Calu3 (cell line): ENCODE measurements at regions of chr5 and their contacts with region 1.

Region 1: DNA sequence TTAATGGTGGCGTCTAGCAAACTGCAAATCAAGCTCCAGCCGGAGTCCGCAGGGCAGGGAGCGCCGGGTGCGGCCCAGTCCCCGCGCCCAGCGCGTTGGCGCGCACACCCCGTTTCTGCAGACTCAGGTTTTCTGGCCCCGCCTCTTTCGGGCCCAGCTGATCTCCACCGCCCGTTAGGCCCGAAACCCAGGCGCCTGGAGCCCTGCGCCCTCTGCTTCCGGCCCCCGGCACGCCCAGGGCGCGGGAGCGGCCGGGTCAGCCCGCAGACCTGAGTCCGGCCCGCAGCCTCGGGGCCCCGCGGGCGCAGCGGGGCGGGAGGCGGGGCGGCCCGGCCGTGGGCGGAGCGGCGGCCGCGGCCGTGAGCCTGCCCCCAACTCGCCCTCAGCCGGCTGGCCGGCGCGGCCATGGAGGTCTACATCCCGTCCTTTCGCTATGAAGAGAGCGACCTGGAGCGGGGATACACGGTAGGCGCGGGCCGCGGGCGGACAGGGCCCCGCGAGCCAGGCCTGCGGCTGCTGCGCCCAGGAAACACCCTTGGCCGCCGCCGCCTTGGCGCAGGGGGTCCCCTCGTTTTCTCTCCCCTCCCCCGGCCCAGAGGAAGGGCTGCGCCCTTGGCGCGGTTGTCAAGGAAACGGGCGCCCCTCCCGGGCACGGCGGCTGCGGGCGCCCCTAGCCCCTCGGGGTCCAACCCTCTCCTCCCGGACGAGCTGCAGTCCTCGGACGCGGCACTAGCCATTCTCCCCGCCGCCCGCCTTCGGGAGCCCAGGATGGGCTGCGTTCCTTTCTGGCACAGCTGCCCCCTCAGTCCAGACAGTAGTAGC is at the start of gene SNX24:
- DNase-seq: peak; percentile 85
- H3K4me3 Mint-ChIP-seq: peak within 1 kb of the TSS; percentile 84
- H3K27ac Mint-ChIP-seq: peak within 1 kb of the TSS; percentile 88
- H3K4me1 Mint-ChIP-seq: peaks cover 41% of the 10 kb centered on the region
- H3K27me3 Mint-ChIP-seq: no peaks in the 10 kb centered on the region
- CTCF ChIP-seq: no peak
- total RNA-seq, gene SNX24: 16.1 and 23.5 TPM in 2 replicates

Region 2: GRCh38 chr5:122775550-122776542 is 69.6 kb before region 1 on chr5:
- CTCF ChIA-PET with region 1: no interaction called
- intact Hi-C with region 1: loop called (anchors 2 kb)
- DNase-seq: no peak
- H3K4me3 Mint-ChIP-seq: peak overlapping the region; percentile 95
- H3K27ac Mint-ChIP-seq: peak overlapping the region; percentile 93
- H3K4me1 Mint-ChIP-seq: peaks cover 29% of the 10 kb centered on the region
- H3K27me3 Mint-ChIP-seq: peaks cover 6% of the 10 kb centered on the region
- CTCF ChIP-seq: no peak

Region 3: DNA sequence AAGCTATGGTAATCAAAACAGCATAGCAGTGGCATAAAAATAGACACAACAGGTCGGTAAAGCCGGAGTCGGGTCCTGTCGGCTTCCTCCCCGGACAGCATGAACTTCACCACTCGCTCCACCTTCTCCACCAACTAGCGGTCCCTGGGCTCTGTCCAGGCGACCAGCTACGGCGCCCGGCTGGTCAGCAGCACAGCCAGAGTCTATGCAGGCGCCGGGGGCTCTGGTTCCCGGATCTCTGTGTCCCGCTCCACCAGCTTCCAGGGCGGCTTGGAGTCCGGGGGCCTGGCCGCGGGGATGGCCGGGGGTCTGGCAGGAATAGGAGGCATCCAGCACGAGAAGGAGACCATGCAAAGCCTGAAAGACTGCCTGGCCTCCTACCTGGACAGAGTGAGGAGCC is 790.6 kb after region 1 on chr5:
- CTCF ChIA-PET with region 1: no interaction called
- intact Hi-C with region 1: no loop called
- DNase-seq: no peak
- H3K4me3 Mint-ChIP-seq: no peak overlapping the region
- H3K27ac Mint-ChIP-seq: no peak overlapping the region
- H3K4me1 Mint-ChIP-seq: no peaks in the 10 kb centered on the region
- H3K27me3 Mint-ChIP-seq: no peaks in the 10 kb centered on the region
- CTCF ChIP-seq: no peak